ENCODE measurements at regions of chr1 and their contacts with region 1.

Region 1: DNA sequence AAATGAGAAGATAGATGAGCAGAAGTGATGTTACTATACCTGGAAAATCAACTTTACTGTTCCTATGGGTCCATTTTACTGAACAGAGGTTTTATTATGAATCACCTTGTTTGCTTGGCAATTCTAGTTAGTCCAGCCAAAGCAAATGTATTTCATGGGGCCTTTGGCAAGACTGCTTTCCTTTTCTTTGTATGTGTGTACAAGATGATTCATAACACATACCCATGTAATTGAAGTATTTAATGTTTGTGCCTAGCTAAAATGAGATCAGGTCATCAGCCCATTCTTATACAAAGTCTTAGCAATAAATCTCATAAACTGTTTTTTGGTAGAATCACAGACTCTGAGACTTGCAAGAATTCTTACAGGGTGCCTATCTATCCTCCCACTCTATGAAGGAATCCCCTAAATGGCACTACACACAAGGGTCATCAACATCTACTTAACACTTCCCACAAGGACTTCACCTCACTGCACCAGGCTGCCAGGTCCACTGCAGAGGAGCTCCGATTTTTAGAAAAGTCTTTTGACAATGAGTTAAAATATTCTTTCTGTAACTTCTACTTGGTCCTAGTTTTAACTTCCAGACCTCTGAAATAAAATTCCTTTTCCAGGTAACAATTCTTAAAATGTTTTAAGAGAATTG is 58.5 kb downstream of the LPAR3 start:
- DNase-seq: peak; percentile 95
- ATAC-seq: peak; percentile 64
- H3K4me3 ChIP-seq: peak overlapping the region; percentile 14; the same call in 1 of the 2 replicates
- H3K27ac ChIP-seq: peak overlapping the region; percentile 97
- H3K4me1 ChIP-seq: peaks cover 54% of the 10 kb centered on the region
- H3K27me3 ChIP-seq: no peaks in the 10 kb centered on the region
- CTCF ChIP-seq: no peak

Region 2: GRCh38 chr1:84690397-84691121 is 144.0 kb before region 1 on chr1 and contains the start of gene SSX2IP:
- CTCF ChIA-PET with region 1: no interaction called
- POLR2A ChIA-PET with region 1: no interaction called
- intact Hi-C with region 1: loop called (anchors 10 kb)
- DNase-seq: peak; percentile 99
- ATAC-seq: peak; percentile 87
- H3K4me3 ChIP-seq: peak within 1 kb of the TSS; percentile 75
- H3K27ac ChIP-seq: peak within 1 kb of the TSS; percentile 50
- H3K4me1 ChIP-seq: peaks cover 31% of the 10 kb centered on the region
- H3K27me3 ChIP-seq: no peaks in the 10 kb centered on the region
- CTCF ChIP-seq: no peak
- total RNA-seq, gene SSX2IP: 22.8 and 28.0 TPM in 2 replicates

Region 3: DNA sequence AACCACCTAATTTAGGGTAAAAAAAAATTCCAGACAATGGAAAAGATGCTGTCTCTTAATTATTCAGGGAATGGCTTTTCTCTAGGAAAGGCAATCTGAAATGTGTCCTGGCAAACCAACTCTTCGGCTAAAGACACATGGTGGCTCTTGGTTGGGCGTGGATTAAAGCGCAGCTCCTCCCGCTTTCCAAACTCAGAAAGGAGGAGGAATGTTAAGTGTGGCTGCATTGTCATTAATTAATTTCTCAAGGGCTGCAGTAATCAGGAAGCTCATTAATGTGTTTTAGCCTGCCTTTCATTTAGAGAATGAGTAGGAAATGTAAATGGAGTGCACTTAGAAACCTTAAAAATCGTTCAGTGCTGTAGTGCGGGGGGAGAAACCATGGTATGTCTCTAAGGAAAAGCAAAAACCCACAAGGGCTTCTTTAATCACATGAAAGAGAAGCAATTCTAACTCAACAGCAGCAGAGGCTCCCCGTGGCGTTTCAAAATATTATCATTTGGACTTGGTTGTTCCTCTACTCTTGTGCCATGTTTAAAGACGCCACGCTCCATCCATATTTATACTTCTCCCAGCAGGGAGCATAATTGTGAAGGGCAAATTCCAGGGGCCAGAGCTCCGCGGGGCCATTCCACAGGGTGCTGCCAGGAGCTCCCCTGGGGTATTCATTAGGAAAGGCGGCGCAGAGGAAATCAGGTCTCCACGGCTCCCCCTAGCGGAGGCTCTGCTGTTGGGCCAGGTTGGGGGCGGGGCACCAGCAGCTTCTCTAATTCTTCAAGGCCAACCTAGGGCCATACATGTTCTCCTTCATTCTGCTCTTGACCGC is 52.4 kb before region 1 on chr1:
- CTCF ChIA-PET with region 1: no interaction called
- POLR2A ChIA-PET with region 1: no interaction called
- intact Hi-C with region 1: loop called (anchors 1 kb)
- DNase-seq: peak; percentile 40
- ATAC-seq: no peak
- H3K4me3 ChIP-seq: no peak overlapping the region
- H3K27ac ChIP-seq: no peak overlapping the region
- H3K4me1 ChIP-seq: peaks cover 33% of the 10 kb centered on the region
- H3K27me3 ChIP-seq: no peaks in the 10 kb centered on the region
- CTCF ChIP-seq: peak; percentile 70

Region 4: GRCh38 chr1:84853741-84854721 is 19.5 kb after region 1 on chr1:
- CTCF ChIA-PET with region 1: no interaction called
- POLR2A ChIA-PET with region 1: no interaction called
- intact Hi-C with region 1: loop called (anchors 1 kb)
- DNase-seq: peak; percentile 97
- ATAC-seq: peak; percentile 92
- H3K4me3 ChIP-seq: no peak overlapping the region
- H3K27ac ChIP-seq: peak overlapping the region; percentile 96
- H3K4me1 ChIP-seq: peaks cover 56% of the 10 kb centered on the region
- H3K27me3 ChIP-seq: no peaks in the 10 kb centered on the region
- CTCF ChIP-seq: no peak

Measured in PC-3 (cell line).